ENCODE measurements at regions of chr19 and their contacts with region 1.

Region 1: GRCh38 chr19:57769345-57770131 is at the start of gene ZNF586:
- DNase-seq: peak; percentile 82 to 91 (median 85)
- H3K4me3 ChIP-seq: peak within 1 kb of the TSS; percentile 62 to 75
- H3K4me3 Mint-ChIP-seq: peak within 1 kb of the TSS; percentile 96 to 99 (median 96)
- H3K27ac ChIP-seq: peak within 1 kb of the TSS; percentile 75
- H3K27ac Mint-ChIP-seq: peak within 1 kb of the TSS; percentile 91 to 98 (median 96)
- H3K4me1 ChIP-seq: peaks cover 20% of the 10 kb centered on the region
- H3K4me1 Mint-ChIP-seq: peaks cover 23 to 51% (median 33%) of the 10 kb centered on the region in 4 donors
- H3K27me3 ChIP-seq: no peaks in the 10 kb centered on the region
- H3K27me3 Mint-ChIP-seq: no peaks in the 10 kb centered on the region
- total RNA-seq, gene ZNF586: 46.4 to 51.7 TPM

Region 2: DNA sequence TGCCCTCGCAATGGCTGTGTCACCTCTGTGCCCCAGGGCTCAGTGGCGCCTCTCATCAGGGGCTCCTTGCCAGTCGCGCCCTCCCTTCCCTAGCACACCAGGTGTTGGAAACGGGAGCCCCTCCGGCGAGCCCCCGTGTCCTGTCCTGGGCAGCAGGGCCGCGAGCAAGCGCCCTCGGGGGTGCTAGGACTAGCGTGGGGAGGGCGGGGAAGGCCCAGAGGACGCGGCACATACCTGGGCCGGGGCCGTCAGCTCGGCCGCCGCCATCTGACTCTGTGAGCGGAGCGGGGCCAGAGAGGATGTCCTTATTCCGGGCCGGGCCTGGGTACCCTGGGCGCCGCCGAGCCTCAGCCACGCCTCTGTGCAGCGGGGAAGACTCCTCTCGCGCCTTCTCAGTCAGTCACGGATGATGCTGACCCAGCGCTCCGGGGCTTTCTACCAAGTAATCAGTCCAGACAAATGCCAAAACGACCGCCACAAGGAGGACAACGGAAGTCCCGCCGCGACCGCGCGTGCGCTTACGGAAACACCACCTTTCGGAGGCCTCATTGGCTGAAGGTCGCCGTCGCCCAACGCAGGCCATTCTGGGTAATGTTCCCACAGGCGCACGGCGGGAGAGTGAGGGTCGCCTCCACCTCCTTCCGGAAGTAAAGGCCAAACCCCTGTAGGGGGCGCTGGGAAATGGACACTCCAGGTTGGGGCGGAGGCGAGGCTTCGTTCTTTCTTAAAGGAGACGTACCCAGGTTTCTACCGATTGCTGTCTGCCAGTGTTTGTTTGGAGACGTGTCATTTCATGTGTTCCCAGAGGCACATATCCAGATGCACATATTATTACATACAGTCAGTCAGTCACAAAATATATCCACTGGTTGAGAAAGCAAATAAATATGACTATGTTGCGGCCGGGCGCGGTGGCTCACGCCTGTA is 177.9 kb after region 1 on chr19 and contains the start of gene ZNF256:
- CTCF ChIA-PET with region 1: no interaction called
- POLR2A ChIA-PET with region 1: no interaction called
- intact Hi-C with region 1: loop called (anchors 1 kb)
- DNase-seq: peak; percentile 79 to 85 (median 82)
- H3K4me3 ChIP-seq: peak within 1 kb of the TSS; percentile 69 to 89
- H3K4me3 Mint-ChIP-seq: peak within 1 kb of the TSS; percentile 90 to 98 (median 95)
- H3K27ac ChIP-seq: peak within 1 kb of the TSS; percentile 66
- H3K27ac Mint-ChIP-seq: peak within 1 kb of the TSS; percentile 78 to 98 (median 92)
- H3K4me1 ChIP-seq: peaks cover 18% of the 10 kb centered on the region
- H3K4me1 Mint-ChIP-seq: peaks cover 15 to 24% (median 20%) of the 10 kb centered on the region in 4 donors
- H3K27me3 ChIP-seq: no peaks in the 10 kb centered on the region
- H3K27me3 Mint-ChIP-seq: no peaks in the 10 kb centered on the region
- total RNA-seq, gene ZNF256: 12.4 to 13.9 TPM

Region 3: GRCh38 chr19:57992841-57993240 is 223.3 kb after region 1 on chr19:
- CTCF ChIA-PET with region 1: no interaction called
- POLR2A ChIA-PET with region 1: no interaction called
- intact Hi-C with region 1: no loop called
- DNase-seq: no peak
- H3K4me3 ChIP-seq: no peak overlapping the region
- H3K4me3 Mint-ChIP-seq: no peak overlapping the region
- H3K27ac ChIP-seq: no peak overlapping the region
- H3K27ac Mint-ChIP-seq: no peak overlapping the region
- H3K4me1 ChIP-seq: no peaks in the 10 kb centered on the region
- H3K4me1 Mint-ChIP-seq: peaks cover 0 to 2% (median 0%) of the 10 kb centered on the region in 4 donors
- H3K27me3 ChIP-seq: no peaks in the 10 kb centered on the region
- H3K27me3 Mint-ChIP-seq: no peaks in the 10 kb centered on the region